AG04449 (cell line): ENCODE measurements at regions of chr20 and their contacts with region 1.

Region 1: GRCh38 chr20:50189681-50190582 is 698 bp upstream of the CEBPB start:
- DNase-seq: no peak
- H3K4me3 ChIP-seq: peak overlapping the region; percentile 94
- CTCF ChIP-seq: peak; percentile 92

Region 2: DNA sequence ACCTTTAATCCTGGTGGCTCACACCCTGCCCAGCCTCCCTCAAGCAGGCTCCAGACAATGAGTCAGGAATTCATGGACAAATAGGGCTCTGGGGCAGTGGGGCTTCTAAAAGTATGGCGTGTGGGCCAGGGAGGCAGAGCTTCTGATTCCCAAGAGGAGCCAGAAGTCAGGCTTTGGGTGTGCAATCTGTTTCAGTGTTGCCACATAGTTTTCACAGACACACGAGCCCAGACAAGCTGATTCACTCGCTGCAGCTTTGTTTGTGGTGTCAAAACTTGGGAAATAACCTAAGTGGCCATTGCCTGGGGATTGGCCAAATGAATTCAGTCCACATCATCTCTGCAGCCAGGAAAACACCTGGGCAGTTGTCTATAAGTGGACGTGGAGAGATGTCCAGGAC is 45.6 kb before region 1 on chr20:
- CTCF ChIA-PET with region 1: no interaction called
- POLR2A ChIA-PET with region 1: no interaction called
- DNase-seq: peak; percentile 98
- H3K4me3 ChIP-seq: no peak overlapping the region
- CTCF ChIP-seq: no peak

Region 3: DNA sequence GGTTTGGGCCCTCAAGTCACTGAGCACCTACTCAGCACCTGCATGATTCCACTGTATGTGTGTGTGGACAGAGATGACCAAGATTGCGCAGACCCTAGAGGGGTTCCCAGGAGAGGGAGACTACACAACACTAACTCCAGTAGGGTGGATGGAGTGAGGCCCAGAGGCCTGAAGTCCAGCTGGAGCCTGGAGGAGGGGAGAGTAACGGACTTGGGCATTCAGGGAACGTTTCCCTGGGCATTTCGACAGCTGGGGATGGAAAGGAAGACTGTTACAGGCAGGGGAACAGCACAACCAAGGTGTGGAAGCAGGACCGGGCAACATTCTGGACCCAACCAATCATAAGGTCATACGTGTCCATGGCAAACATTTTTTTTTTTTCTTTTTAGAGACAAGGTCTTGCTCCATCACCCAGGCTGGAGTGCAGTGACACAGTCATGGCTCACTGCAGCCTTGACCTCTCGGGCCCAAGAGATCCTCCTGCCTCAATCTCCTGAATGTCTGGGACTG is 10.4 kb before region 1 on chr20:
- CTCF ChIA-PET with region 1: interaction called, 12 read pairs
- POLR2A ChIA-PET with region 1: no interaction called
- DNase-seq: no peak
- H3K4me3 ChIP-seq: no peak overlapping the region
- CTCF ChIP-seq: no peak

Region 4: DNA sequence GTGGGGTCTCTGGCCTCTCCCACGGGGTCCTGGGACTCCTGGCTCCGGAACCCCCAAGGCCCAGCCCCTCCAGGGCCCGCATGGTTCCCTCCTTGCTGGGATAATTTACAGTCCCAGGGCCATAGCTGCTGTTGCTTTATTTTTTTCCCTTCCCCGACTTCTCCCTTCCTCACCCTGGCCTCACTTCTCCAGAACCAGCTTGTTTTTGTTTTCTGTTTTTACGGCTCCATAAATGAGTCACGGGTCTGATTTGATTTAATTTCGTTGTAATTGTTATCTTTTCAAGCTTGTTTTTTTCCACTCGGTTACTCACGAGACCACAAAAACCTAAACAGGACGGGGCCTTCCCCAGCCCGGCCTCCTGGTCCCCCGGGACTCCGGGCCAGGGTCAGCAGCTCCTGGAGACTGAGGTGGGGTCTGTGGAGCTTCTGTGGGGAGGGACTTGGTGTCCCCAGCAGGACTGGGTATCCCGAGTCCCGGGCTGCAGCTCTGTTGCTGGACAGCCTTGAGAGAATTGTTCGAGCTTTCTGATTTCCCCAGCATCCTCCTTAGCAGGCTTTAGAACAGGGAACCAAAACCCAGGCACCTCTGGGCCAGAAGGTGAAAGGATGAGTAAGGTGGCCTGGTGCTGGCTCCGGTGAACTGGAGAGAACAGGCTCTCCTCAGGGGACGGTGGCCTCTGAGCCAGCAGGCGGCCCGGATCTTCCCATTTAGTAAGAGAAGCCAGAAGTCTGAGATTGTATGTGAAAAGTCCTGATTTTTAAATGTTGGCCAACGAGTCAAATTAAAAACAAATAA is 95.6 kb after region 1 on chr20:
- CTCF ChIA-PET with region 1: interaction called, 7 read pairs
- POLR2A ChIA-PET with region 1: interaction called, 14 read pairs
- DNase-seq: no peak
- H3K4me3 ChIP-seq: no peak overlapping the region
- CTCF ChIP-seq: no peak

Region 5: GRCh38 chr20:50303573-50304501 is 113.9 kb after region 1 on chr20:
- CTCF ChIA-PET with region 1: interaction called, 4 read pairs
- POLR2A ChIA-PET with region 1: interaction called, 13 read pairs
- DNase-seq: no peak
- H3K4me3 ChIP-seq: no peak overlapping the region
- CTCF ChIP-seq: no peak

Region 6: DNA sequence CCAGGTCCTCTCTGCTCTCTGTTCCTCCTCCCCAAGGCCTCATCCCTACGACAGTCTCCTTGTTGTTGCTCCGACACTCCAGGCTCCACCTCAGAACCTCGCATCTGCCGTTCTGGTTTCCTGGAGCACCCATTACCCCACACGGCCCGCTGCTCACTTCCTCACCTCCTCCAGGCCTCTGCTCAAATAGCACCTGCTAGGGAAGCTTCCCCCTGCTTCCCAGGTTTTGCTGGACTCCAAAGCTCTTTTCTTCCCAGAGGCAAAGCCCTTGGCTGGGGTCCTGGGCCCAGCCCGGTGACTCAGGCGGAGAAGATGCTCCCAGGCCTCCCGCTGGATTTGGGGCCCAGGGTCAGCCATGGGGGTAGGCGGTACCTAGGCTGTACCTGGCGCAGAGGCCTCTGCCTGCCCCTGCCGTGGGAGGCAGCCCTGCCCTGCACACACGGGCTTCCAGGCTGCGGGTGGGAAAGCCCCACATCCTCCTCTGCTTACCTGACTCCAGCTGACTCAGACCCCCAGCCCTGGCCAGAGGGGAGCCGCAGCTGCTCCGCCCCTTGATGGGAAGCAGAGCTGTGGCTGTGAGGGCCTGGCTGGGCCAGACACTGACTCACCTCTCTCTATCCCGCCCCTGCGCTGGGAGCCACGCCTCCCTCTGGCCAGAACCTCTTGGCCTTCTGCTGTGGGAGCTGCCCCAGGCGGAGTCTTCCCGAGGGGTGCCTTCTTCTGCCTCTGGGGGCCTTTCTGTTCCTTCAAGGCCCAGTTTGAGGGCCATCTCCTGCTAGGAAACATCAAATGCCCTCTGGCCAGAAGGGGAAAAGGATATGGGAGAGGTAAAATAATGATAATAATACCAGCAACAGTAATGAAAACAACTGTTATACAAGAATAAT is 131.2 kb after region 1 on chr20:
- CTCF ChIA-PET with region 1: no interaction called
- POLR2A ChIA-PET with region 1: interaction called, 13 read pairs
- DNase-seq: peak; percentile 62
- H3K4me3 ChIP-seq: peak overlapping the region; percentile 42
- CTCF ChIP-seq: no peak

Region 7: GRCh38 chr20:50379049-50379990 is 189.4 kb after region 1 on chr20:
- CTCF ChIA-PET with region 1: interaction called, 9 read pairs
- POLR2A ChIA-PET with region 1: interaction called, 11 read pairs
- DNase-seq: peak; percentile 52
- H3K4me3 ChIP-seq: no peak overlapping the region
- CTCF ChIP-seq: no peak

Region 8: GRCh38 chr20:50460460-50461267 is 270.7 kb after region 1 on chr20:
- CTCF ChIA-PET with region 1: interaction called, 523 read pairs
- POLR2A ChIA-PET with region 1: interaction called, 11 read pairs
- DNase-seq: no peak
- H3K4me3 ChIP-seq: no peak overlapping the region
- CTCF ChIP-seq: peak; percentile 90

Region 9: GRCh38 chr20:50680412-50680908 is 490.5 kb after region 1 on chr20:
- CTCF ChIA-PET with region 1: no interaction called
- POLR2A ChIA-PET with region 1: no interaction called
- DNase-seq: no peak
- H3K4me3 ChIP-seq: no peak overlapping the region
- CTCF ChIP-seq: no peak